PC-9 (cell line): ENCODE measurements at regions of chr12 and their contacts with region 1.

Region 1: DNA sequence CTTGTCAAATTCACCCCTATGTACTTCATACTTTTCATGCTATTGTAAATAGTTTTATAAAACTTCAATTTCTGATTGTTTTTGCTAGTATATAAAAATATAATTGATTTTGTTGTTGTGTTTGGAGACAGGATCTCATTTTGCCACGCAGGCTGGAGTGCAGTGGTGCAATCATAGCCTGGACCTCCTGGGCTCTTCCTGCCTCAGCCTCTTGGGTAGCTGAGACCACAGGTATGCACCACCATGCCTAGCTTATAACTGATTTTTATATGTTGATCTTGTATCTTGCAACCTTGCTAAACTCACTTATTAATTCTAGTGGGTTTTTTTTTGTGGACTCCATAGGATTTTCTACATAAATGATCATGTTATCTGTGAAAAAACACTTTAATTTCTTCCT is 23.5 kb downstream of the ATP5MC2 start:
- DNase-seq: no peak
- H3K4me3 ChIP-seq: no peak overlapping the region
- H3K27ac ChIP-seq: no peak overlapping the region
- H3K4me1 ChIP-seq: no peaks in the 10 kb centered on the region
- H3K27me3 ChIP-seq: no peaks in the 10 kb centered on the region
- CTCF ChIP-seq: no peak

Region 2: DNA sequence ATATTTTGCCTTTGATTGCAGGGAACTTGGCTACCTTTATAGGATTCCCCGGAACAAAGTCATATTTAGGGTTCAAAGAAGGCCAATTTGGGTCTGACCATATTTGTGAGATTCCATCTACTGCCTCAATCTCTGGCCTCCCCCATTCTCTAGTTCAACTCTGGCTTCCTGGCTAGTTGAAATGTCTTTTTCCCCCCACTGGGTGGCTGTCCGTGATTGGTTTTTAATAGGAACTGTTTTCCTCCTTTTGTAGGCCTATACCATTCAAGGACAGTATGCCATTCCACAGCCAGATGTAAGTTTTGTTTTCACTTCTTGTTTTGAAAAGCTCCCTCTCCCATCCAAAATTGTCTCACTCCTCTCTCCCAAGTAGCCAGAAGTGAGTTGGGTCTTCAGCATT is 186.7 kb before region 1 on chr12:
- CTCF ChIA-PET with region 1: no interaction called
- POLR2A ChIA-PET with region 1: no interaction called
- intact Hi-C with region 1: no loop called
- DNase-seq: no peak
- H3K4me3 ChIP-seq: no peak overlapping the region
- H3K27ac ChIP-seq: no peak overlapping the region
- H3K4me1 ChIP-seq: no peaks in the 10 kb centered on the region
- H3K27me3 ChIP-seq: no peaks in the 10 kb centered on the region
- CTCF ChIP-seq: no peak

Region 3: GRCh38 chr12:53492830-53493611 is 159.3 kb before region 1 on chr12:
- CTCF ChIA-PET with region 1: no interaction called
- POLR2A ChIA-PET with region 1: interaction called, 22 read pairs
- intact Hi-C with region 1: no loop called
- DNase-seq: peak; percentile 68 to 93
- H3K4me3 ChIP-seq: peak overlapping the region; percentile 64
- H3K27ac ChIP-seq: no peak overlapping the region
- H3K4me1 ChIP-seq: peaks cover 25% of the 10 kb centered on the region; the same call in 1 of the 2 replicates
- H3K27me3 ChIP-seq: no peaks in the 10 kb centered on the region
- CTCF ChIP-seq: no peak

Region 4: GRCh38 chr12:53625946-53626701 is 26.2 kb before region 1 on chr12 and contains the start of gene ATF7:
- CTCF ChIA-PET with region 1: interaction called, 4 read pairs
- POLR2A ChIA-PET with region 1: interaction called, 13 read pairs
- intact Hi-C with region 1: no loop called
- DNase-seq: peak; percentile 90 to 98
- H3K4me3 ChIP-seq: peak within 1 kb of the TSS; percentile 82
- H3K27ac ChIP-seq: peak within 1 kb of the TSS; percentile 72
- H3K4me1 ChIP-seq: peaks cover 29% of the 10 kb centered on the region
- H3K27me3 ChIP-seq: no peaks in the 10 kb centered on the region
- CTCF ChIP-seq: no peak
- total RNA-seq, gene ATF7: 16.3 and 24.7 TPM in 2 replicates

Region 5: DNA sequence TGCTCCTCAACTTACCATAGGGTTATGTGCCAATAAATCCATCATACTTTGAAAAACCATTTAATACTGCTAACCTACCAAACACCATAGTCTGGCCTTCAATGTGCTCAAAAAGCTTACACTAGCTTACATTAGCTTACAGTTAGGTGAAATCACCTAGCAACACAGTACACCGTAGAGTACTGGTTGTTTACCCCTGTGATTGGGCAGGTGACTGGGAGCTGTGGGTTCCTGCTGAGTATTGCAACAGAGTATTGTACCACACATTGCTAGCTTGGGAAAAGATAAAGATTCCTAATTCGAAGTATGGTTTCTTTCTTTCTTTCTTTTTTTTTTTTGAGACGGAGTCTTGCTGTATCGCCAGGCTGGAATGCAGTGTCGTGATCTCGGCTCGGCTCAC is 17.9 kb after region 1 on chr12:
- CTCF ChIA-PET with region 1: no interaction called
- POLR2A ChIA-PET with region 1: no interaction called
- intact Hi-C with region 1: no loop called
- DNase-seq: no peak
- H3K4me3 ChIP-seq: no peak overlapping the region
- H3K27ac ChIP-seq: no peak overlapping the region
- H3K4me1 ChIP-seq: peaks cover 9% of the 10 kb centered on the region; the same call in 1 of the 2 replicates
- H3K27me3 ChIP-seq: no peaks in the 10 kb centered on the region
- CTCF ChIP-seq: no peak

Region 6: DNA sequence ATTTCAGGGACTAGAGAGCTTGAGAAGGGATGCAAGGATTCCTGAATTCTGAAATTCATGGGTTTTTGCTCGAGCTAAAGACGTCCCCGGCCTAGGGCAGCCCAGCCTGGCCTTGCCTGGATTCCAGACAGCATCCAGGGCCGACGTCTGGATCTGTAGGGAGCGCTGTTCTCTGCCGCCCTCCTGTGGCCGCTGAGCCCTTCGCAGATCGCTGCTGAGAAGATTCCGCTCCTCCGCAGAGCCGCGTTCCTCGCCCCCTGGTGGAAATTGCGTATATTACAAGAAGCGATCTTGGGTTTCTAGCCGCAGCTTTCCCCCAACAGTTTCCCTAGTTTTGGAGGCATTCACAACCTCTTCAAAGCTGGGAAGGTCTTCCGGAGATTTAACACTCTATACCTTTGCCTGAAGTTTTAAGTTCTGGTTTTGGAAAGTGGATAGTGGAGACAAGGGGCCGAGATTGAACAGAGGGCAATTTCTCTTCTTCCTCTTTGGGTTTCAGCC is 94.3 kb after region 1 on chr12:
- CTCF ChIA-PET with region 1: no interaction called
- POLR2A ChIA-PET with region 1: no interaction called
- intact Hi-C with region 1: no loop called
- DNase-seq: peak; percentile 74 to 89
- H3K4me3 ChIP-seq: no peak overlapping the region
- H3K27ac ChIP-seq: no peak overlapping the region
- H3K4me1 ChIP-seq: no peaks in the 10 kb centered on the region
- H3K27me3 ChIP-seq: 0 out of 2 replicates have a peak, but pooled peaks cover 4% of the 10 kb centered on the region
- CTCF ChIP-seq: peak; percentile 99

Region 7: GRCh38 chr12:53928054-53928835 is 275.9 kb after region 1 on chr12:
- CTCF ChIA-PET with region 1: no interaction called
- POLR2A ChIA-PET with region 1: no interaction called
- intact Hi-C with region 1: no loop called
- DNase-seq: no peak
- H3K4me3 ChIP-seq: no peak overlapping the region
- H3K27ac ChIP-seq: no peak overlapping the region
- H3K4me1 ChIP-seq: no peaks in the 10 kb centered on the region
- H3K27me3 ChIP-seq: no peaks in the 10 kb centered on the region
- CTCF ChIP-seq: no peak